ENCODE measurements at regions of chr21 and their contacts with region 1.

Region 1: DNA sequence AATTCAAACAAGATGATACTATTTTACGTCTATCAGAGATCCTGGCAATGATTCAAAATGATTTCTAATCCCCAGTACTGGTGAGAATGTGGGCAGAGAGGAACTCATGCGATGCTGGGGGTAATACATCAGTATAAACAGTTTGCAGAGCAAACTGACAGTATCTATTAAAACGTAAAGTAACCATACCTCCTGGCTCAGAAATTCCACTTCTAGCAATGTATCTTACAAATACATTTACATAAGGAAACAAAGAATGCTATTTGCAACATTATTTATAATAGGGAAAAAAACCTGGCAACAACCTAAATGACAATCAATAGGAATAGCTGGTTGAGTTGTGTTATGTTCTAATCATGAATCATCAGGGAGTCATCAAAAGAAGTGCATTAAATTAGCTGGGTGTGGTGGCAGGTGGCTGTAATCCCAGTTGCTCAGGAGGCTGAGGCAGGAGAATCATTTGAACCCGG is 15.9 kb downstream of the RCAN1 start:
- DNase-seq: no peak
- H3K4me3 ChIP-seq: no peak overlapping the region
- H3K27ac ChIP-seq: no peak overlapping the region
- H3K4me1 ChIP-seq: peaks cover 0 to 8% (median 3%) of the 10 kb centered on the region in 4 donors
- H3K27me3 ChIP-seq: no peaks in the 10 kb centered on the region
- CTCF ChIP-seq: no peak

Region 2: DNA sequence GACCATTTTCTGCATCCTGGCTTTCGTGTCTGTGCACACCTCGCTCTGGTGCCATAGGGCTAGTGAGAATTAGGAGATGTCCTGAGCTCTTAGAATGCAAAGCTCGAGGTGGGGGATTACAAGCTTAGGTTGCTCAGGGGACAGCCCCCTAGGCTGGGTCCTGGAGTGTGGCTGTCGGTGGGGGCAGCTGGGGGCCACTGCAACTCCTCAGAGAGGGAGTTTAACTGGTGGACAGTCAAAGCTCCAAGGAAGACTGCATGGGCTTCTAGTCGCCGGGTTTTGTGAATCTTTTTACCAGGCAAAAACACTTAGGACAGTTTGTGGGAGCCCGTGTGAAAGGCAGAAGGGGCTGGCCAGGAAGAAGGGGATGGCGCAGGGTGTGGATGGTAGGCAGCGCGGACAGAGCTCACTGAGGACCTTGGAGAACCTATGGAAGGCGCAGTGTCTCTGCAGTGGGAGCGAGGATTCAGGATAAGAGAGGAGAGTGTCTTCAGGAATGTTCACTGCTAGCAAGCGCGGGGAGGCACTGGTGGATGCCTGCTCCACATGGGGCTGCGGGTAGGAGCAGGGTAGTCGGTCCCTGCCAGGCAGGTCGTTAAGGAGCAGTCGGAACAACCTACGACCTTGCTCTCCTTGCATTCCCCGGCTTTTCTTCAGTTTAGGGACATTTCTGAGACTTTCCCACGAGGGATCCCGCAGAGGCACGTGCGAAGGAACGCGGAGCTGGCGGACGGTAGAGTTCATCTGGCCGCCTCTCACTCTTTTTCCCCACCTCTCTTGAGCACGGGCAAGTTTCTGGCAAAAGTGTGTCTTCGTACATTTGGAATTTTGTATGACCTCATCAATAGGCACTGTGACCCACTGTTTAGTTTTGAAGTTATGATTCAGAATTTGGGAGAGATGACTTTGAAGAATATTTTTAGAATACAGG is 74.0 kb before region 1 on chr21:
- intact Hi-C with region 1: loop called (anchors 5 kb)
- DNase-seq: no peak
- H3K4me3 ChIP-seq: peak overlapping the region; percentile 48 to 57
- H3K27ac ChIP-seq: peak overlapping the region; percentile 78 to 82
- H3K4me1 ChIP-seq: peaks cover 0 to 62% (median 39%) of the 10 kb centered on the region in 4 donors
- H3K27me3 ChIP-seq: no peaks in the 10 kb centered on the region
- CTCF ChIP-seq: no peak

Region 3: DNA sequence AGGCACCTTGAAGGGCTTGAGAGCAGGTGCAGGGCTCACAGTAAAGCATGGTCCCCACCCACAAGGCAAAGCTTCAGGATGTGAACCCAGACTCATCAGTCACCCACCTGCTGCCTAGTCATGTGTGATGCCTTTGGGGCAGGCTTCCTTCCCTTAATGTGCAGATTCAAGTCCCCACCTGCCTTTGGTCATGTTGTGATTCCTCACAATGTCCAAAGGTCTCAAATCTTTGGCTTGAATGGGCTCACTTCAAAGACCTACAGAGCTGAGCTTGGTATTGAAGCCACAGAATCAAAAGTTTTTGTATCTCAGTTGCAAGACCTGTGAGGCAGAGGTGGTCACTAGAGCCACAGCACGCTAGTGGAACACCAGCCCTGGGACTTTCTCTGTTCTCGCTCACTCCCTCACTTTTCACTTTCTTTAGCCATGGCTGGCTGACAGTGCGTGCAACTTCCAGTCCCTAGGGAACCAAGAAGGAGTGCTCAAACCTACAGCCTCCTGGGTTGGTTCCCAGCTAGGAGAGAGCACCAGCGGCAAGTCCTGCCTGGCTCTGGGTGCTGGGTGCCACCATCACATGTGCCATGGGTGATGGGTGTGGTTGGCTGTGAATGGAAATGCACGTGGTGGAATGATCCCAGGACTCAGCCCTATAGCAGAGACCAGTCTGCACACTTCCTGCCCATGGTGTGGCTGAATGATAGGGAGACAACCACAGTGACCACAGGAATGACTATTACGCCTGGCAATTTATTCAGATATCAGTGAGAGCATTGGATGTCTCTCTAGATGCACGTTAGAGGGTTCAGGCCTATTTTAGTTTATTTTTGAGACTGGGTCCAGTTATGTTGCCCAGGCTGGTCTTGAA is 43.5 kb after region 1 on chr21:
- intact Hi-C with region 1: no loop called
- DNase-seq: no peak
- H3K4me3 ChIP-seq: no peak overlapping the region
- H3K27ac ChIP-seq: no peak overlapping the region
- H3K4me1 ChIP-seq: no peaks in the 10 kb centered on the region
- H3K27me3 ChIP-seq: peaks cover 0 to 11% of the 10 kb centered on the region in 2 donors
- CTCF ChIP-seq: no peak